ENCODE measurements at regions of chr3 and their contacts with region 1.

Region 1: GRCh38 chr3:179015551-179016020 is 56.0 kb downstream of the ZMAT3 start:
- DNase-seq: peak; percentile 56 to 87 (median 64)
- ATAC-seq: peak; percentile 92
- H3K4me3 ChIP-seq: no peak overlapping the region
- H3K27ac ChIP-seq: no peak overlapping the region
- H3K4me1 ChIP-seq: peaks cover 0 to 6% of the 10 kb centered on the region in 2 experiments; a peak in 2 of 5 replicates
- H3K27me3 ChIP-seq: no peaks in the 10 kb centered on the region
- CTCF ChIP-seq: peak; percentile 80 to 91 (median 85)
- EP300 ChIP-seq: no peak
- POLR2A ChIP-seq: no peak
- RAD21 ChIP-seq: peak; percentile 96 to 97

Region 2: DNA sequence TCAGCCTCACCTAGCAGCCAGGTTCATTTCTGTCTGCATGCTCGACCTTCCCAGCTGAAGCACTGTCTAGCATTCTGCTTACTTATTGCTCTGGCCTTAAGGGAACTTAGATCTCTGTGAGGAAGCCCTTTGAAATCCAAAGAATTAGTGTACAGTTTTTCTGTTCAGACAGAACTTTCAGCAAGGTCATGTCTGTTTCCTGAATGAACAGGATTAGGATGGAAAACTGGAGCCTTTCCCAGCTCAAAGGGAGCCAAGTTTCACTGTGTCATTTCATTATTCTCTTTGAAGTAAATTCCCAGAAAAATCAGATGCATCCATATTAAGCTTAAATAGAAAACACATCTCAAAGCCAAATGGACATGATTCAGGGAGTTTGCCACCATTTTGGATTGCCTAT is 936.6 kb before region 1 on chr3:
- CTCF ChIA-PET with region 1: no interaction called
- POLR2A ChIA-PET with region 1: no interaction called
- in situ Hi-C with region 1: no loop called
- intact Hi-C with region 1: no loop called
- DNase-seq: no peak
- ATAC-seq: no peak
- H3K4me3 ChIP-seq: no peak overlapping the region
- H3K27ac ChIP-seq: no peak overlapping the region
- H3K4me1 ChIP-seq: peaks cover 0 to 3% of the 10 kb centered on the region in 2 experiments; a peak in 1 of 5 replicates
- H3K27me3 ChIP-seq: no peaks in the 10 kb centered on the region
- CTCF ChIP-seq: no peak
- EP300 ChIP-seq: no peak
- POLR2A ChIP-seq: no peak
- RAD21 ChIP-seq: no peak

Region 3: DNA sequence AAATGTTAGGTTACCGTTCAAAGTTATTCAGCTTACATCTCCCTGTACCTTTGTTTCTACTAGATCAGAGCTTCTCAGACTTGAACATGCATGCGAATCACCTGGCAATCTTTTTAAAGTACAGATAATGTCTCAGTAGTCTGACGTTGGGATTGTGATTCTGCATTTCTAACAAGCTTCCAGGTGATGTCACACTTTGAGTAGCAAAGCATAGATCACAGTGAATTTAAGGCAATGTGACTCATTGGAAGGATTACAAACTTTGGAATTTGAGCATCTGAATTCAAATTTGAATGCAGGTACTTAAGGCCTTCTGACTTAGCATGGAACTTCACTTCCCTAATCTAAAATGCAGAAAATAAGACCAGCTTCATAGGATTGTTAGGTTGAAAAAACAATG is 66.8 kb after region 1 on chr3:
- CTCF ChIA-PET with region 1: no interaction called
- POLR2A ChIA-PET with region 1: no interaction called
- in situ Hi-C with region 1: no loop called
- intact Hi-C with region 1: no loop called
- DNase-seq: no peak
- ATAC-seq: no peak
- H3K4me3 ChIP-seq: no peak overlapping the region
- H3K27ac ChIP-seq: no peak overlapping the region
- H3K4me1 ChIP-seq: peaks cover 0 to 5% of the 10 kb centered on the region in 2 experiments; a peak in 1 of 5 replicates
- H3K27me3 ChIP-seq: no peaks in the 10 kb centered on the region
- CTCF ChIP-seq: no peak
- EP300 ChIP-seq: no peak
- POLR2A ChIP-seq: no peak
- RAD21 ChIP-seq: peak in 1 of 2 experiments; percentile 42; a peak in 2 of 4 replicates

Region 4: GRCh38 chr3:179105881-179106280 is 90.3 kb after region 1 on chr3:
- CTCF ChIA-PET with region 1: no interaction called
- POLR2A ChIA-PET with region 1: no interaction called
- in situ Hi-C with region 1: no loop called
- intact Hi-C with region 1: loop called (anchors 2 kb)
- DNase-seq: no peak
- ATAC-seq: no peak
- H3K4me3 ChIP-seq: no peak overlapping the region
- H3K27ac ChIP-seq: no peak overlapping the region
- H3K4me1 ChIP-seq: peaks cover 0 to under 1% of the 10 kb centered on the region in 2 experiments; a peak in 2 of 5 replicates
- H3K27me3 ChIP-seq: no peaks in the 10 kb centered on the region
- CTCF ChIP-seq: no peak
- EP300 ChIP-seq: no peak
- POLR2A ChIP-seq: no peak
- RAD21 ChIP-seq: no peak

Region 5: DNA sequence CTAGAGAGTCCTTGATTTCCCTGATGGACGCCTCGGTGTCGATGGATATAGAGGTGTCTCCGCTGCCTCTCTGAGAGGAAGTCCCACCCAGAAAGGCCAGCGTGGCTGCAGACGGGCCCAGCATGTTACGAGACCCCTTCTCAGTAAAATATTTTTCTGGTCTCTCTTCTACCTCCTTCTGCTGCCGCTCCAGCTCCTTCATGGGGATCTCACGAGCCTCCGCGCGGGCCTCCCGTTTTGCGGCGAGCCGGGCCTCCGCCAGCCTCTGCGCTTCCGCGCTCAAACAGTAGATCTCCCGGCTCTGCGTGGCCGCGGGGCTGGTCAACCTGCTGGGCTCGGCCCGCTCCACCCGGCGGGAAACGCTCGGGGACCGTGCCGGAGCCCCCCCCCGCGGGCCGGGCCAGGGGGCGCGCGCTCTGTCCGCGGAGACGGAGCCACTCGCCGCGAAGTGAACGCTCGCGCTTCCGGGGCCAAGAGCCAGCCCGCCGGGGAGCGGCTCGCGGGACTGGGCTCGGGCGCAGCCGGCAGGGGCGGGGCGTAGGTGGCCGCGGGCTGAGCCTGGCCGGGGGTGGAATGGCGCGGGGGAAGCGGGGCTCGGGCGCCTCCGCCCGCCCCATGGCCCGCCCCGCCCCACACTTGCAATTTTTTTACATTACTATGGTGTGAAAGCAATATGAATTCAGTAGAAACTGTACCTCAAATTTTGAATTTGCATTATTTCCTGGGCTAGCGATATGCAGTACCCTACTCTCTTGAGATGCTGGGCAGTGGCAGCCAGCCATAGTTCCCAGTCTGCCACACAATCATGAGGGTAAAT is 245.6 kb after region 1 on chr3:
- CTCF ChIA-PET with region 1: no interaction called
- POLR2A ChIA-PET with region 1: no interaction called
- in situ Hi-C with region 1: no loop called
- intact Hi-C with region 1: loop called (anchors 10 kb)
- DNase-seq: peak; percentile 90 to 93 (median 92)
- ATAC-seq: peak; percentile 87
- H3K4me3 ChIP-seq: peak overlapping the region; percentile 63
- H3K27ac ChIP-seq: peak overlapping the region; percentile 89
- H3K4me1 ChIP-seq: peaks cover 24 to 25% of the 10 kb centered on the region in 2 experiments; a peak in 4 of 5 replicates
- H3K27me3 ChIP-seq: no peaks in the 10 kb centered on the region
- CTCF ChIP-seq: no peak
- EP300 ChIP-seq: no peak
- POLR2A ChIP-seq: peak; percentile 69; the same call in 1 of the 2 replicates
- RAD21 ChIP-seq: 0 out of 4 replicates have a peak, but pooled peaks of 1 of the 2 experiments have one; percentile 1